ENCODE measurements at regions of chr1 and their contacts with region 1.

Region 1: GRCh38 chr1:40862008-40862863 is at the start of gene CITED4:
- DNase-seq: peak; percentile 92 to 97
- H3K4me3 ChIP-seq: peak within 1 kb of the TSS; percentile 39 to 64 (median 48)
- H3K27ac ChIP-seq: peak within 1 kb of the TSS; percentile 19; the same call in 1 of the 2 replicates
- H3K4me1 ChIP-seq: peaks cover 4 to 8% (median 6%) of the 10 kb centered on the region in 4 experiments
- H3K27me3 ChIP-seq: peaks cover 0 to 20% (median 16%) of the 10 kb centered on the region in 4 experiments; a peak in 5 of 7 replicates
- CTCF ChIP-seq: peak; percentile 46 to 64 (median 58)
- EP300 ChIP-seq: no peak
- POLR2A ChIP-seq: peak; percentile 97 to 98
- RAD21 ChIP-seq: peak; percentile 70 to 78
- total RNA-seq, gene CITED4: 16.0 and 16.3 TPM in 2 replicates

Region 2: GRCh38 chr1:40877698-40878097 is 15.5 kb after region 1 on chr1:
- CTCF ChIA-PET with region 1: interaction called, 6 read pairs
- POLR2A ChIA-PET with region 1: interaction called, 10 read pairs
- DNase-seq: no peak
- H3K4me3 ChIP-seq: no peak overlapping the region
- H3K27ac ChIP-seq: no peak overlapping the region
- H3K4me1 ChIP-seq: peaks cover 1 to 10% (median 4%) of the 10 kb centered on the region in 4 experiments; a peak in 4 of 7 replicates
- H3K27me3 ChIP-seq: no peaks in the 10 kb centered on the region; a peak in 2 of 7 replicates
- CTCF ChIP-seq: no peak
- EP300 ChIP-seq: no peak
- POLR2A ChIP-seq: no peak
- RAD21 ChIP-seq: no peak

Measured in H1 (cell line).